ENCODE measurements at regions of chr12 and their contacts with region 1.

Region 1: GRCh38 chr12:52691076-52691840 is 11.1 kb upstream of the KRT1 start:
- DNase-seq: peak; percentile 43 to 77 (median 64)
- ATAC-seq: peak; percentile 87
- H3K4me3 ChIP-seq: peak overlapping the region; percentile 55
- H3K4me3 Mint-ChIP-seq: peak overlapping the region; percentile 83
- H3K27ac ChIP-seq: no peak overlapping the region
- H3K27ac Mint-ChIP-seq: peak overlapping the region; percentile 87
- H3K4me1 ChIP-seq: peaks cover 32% of the 10 kb centered on the region
- H3K4me1 Mint-ChIP-seq: peaks cover 64% of the 10 kb centered on the region
- H3K27me3 ChIP-seq: no peaks in the 10 kb centered on the region
- H3K27me3 Mint-ChIP-seq: no peaks in the 10 kb centered on the region
- CTCF ChIP-seq: no peak

Region 2: GRCh38 chr12:52629281-52630007 is 61.8 kb before region 1 on chr12:
- CTCF ChIA-PET with region 1: no interaction called
- POLR2A ChIA-PET with region 1: no interaction called
- intact Hi-C with region 1: loop called in 1 of 2 experiments (anchors 5 kb)
- DNase-seq: no peak
- ATAC-seq: peak; percentile 54
- H3K4me3 ChIP-seq: peak overlapping the region; percentile 39
- H3K4me3 Mint-ChIP-seq: peak overlapping the region; percentile 91
- H3K27ac ChIP-seq: no peak overlapping the region
- H3K27ac Mint-ChIP-seq: peak overlapping the region; percentile 89
- H3K4me1 ChIP-seq: peaks cover 62% of the 10 kb centered on the region
- H3K4me1 Mint-ChIP-seq: peaks cover 87% of the 10 kb centered on the region
- H3K27me3 ChIP-seq: no peaks in the 10 kb centered on the region
- H3K27me3 Mint-ChIP-seq: no peaks in the 10 kb centered on the region
- CTCF ChIP-seq: no peak

Region 3: GRCh38 chr12:52741392-52742195 is 50.3 kb after region 1 on chr12:
- CTCF ChIA-PET with region 1: no interaction called
- POLR2A ChIA-PET with region 1: no interaction called
- intact Hi-C with region 1: loop called in 1 of 2 experiments (anchors 5 kb)
- DNase-seq: peak; percentile 39 to 78 (median 58)
- ATAC-seq: peak; percentile 51
- H3K4me3 ChIP-seq: no peak overlapping the region
- H3K4me3 Mint-ChIP-seq: no peak overlapping the region
- H3K27ac ChIP-seq: no peak overlapping the region
- H3K27ac Mint-ChIP-seq: no peak overlapping the region
- H3K4me1 ChIP-seq: no peaks in the 10 kb centered on the region
- H3K4me1 Mint-ChIP-seq: peaks cover 5% of the 10 kb centered on the region
- H3K27me3 ChIP-seq: peaks cover 4 to 5% of the 10 kb centered on the region in 2 experiments
- H3K27me3 Mint-ChIP-seq: peaks cover 17% of the 10 kb centered on the region
- CTCF ChIP-seq: no peak

Measured in CD4-positive, alpha-beta T cell (primary cell).